GM10248 (cell line): ENCODE measurements at regions of chr3 and their contacts with region 1.

Region 1: GRCh38 chr3:132499071-132499470 is 81.8 kb downstream of the DNAJC13 start:
- DNase-seq: no peak
- CTCF ChIP-seq: no peak

Region 2: DNA sequence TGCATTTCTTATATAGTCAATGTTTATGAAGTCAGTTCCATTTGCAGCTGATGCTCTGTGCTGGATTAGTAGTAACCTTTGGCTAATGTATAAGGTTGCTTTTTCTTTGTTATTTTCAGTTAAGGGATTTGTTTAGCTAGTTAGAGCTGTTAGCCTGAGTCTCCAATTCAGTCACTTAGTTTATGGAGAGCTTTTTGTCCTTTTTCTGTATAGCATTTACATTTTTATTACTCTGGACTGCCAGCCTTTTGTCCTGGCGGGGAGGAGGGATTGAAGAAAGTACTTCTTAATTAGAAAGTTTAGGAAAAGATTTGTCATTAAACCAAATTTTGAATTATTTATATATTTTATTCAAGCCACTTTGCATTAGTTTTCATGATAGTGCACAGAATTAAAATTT is 29.7 kb before region 1 on chr3:
- CTCF ChIA-PET with region 1: no interaction called
- POLR2A ChIA-PET with region 1: no interaction called
- DNase-seq: no peak
- CTCF ChIP-seq: no peak

Region 3: DNA sequence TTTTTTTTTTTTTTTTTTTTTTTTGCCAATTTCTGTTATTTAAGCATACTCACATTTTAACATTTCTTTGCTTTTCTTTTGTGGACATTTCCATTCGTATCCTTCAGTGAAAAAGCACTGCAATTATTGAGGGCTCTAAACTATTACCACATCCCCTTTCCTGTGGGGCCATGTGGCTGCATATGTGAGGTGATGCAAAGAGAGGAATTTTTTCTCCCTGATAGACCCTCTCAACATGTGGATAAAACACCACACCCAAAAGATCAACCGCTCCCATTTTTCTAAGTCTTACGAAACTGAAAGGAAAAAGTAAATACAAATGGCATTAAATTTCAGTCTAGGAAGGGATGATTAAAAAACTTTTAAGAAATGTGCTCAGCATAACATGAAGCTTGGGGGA is 13.0 kb before region 1 on chr3:
- CTCF ChIA-PET with region 1: interaction called, 26 read pairs
- POLR2A ChIA-PET with region 1: no interaction called
- DNase-seq: no peak
- CTCF ChIP-seq: no peak